ENCODE measurements at regions of chr19 and their contacts with region 1.

Region 1: GRCh38 chr19:45340232-45340898 is at the start of gene KLC3:
- DNase-seq: peak; percentile 47
- H3K4me3 Mint-ChIP-seq: no peak within 1 kb of the TSS
- H3K27ac Mint-ChIP-seq: no peak within 1 kb of the TSS
- H3K4me1 Mint-ChIP-seq: peaks cover 5% of the 10 kb centered on the region
- H3K27me3 Mint-ChIP-seq: no peaks in the 10 kb centered on the region
- CTCF ChIP-seq: no peak
- total RNA-seq, gene KLC3: 3.9 TPM in 2 replicates

Region 2: GRCh38 chr19:45164577-45165335 is 175.6 kb before region 1 on chr19:
- CTCF ChIA-PET with region 1: interaction called, 5 read pairs
- POLR2A ChIA-PET with region 1: no interaction called
- intact Hi-C with region 1: loop called (anchors 1 kb)
- DNase-seq: peak; percentile 95
- H3K4me3 Mint-ChIP-seq: no peak overlapping the region
- H3K27ac Mint-ChIP-seq: no peak overlapping the region
- H3K4me1 Mint-ChIP-seq: peaks cover 27% of the 10 kb centered on the region
- H3K27me3 Mint-ChIP-seq: no peaks in the 10 kb centered on the region
- CTCF ChIP-seq: no peak

Region 3: GRCh38 chr19:45200568-45200994 is 139.8 kb before region 1 on chr19:
- CTCF ChIA-PET with region 1: interaction called, 4 read pairs
- POLR2A ChIA-PET with region 1: interaction called, 3 read pairs
- intact Hi-C with region 1: loop called (anchors 1 kb)
- DNase-seq: peak; percentile 55
- H3K4me3 Mint-ChIP-seq: no peak overlapping the region
- H3K27ac Mint-ChIP-seq: no peak overlapping the region
- H3K4me1 Mint-ChIP-seq: peaks cover 21% of the 10 kb centered on the region
- H3K27me3 Mint-ChIP-seq: peaks cover 11% of the 10 kb centered on the region
- CTCF ChIP-seq: peak; percentile 18

Region 4: GRCh38 chr19:45250832-45251451 is 89.4 kb before region 1 on chr19 and contains the start of gene MARK4:
- CTCF ChIA-PET with region 1: interaction called, 4 read pairs
- POLR2A ChIA-PET with region 1: no interaction called
- intact Hi-C with region 1: loop called (anchors 2 kb)
- DNase-seq: peak; percentile 50
- H3K4me3 Mint-ChIP-seq: peak within 1 kb of the TSS; percentile 83
- H3K27ac Mint-ChIP-seq: peak within 1 kb of the TSS; percentile 93
- H3K4me1 Mint-ChIP-seq: peaks cover 20% of the 10 kb centered on the region
- H3K27me3 Mint-ChIP-seq: no peaks in the 10 kb centered on the region
- CTCF ChIP-seq: no peak
- total RNA-seq, gene MARK4: 22.4 and 24.2 TPM in 2 replicates

Region 5: GRCh38 chr19:45304141-45304926 is 36.0 kb before region 1 on chr19:
- CTCF ChIA-PET with region 1: no interaction called
- POLR2A ChIA-PET with region 1: no interaction called
- intact Hi-C with region 1: no loop called
- DNase-seq: no peak
- H3K4me3 Mint-ChIP-seq: no peak overlapping the region
- H3K27ac Mint-ChIP-seq: no peak overlapping the region
- H3K4me1 Mint-ChIP-seq: peaks cover 12% of the 10 kb centered on the region
- H3K27me3 Mint-ChIP-seq: no peaks in the 10 kb centered on the region
- CTCF ChIP-seq: no peak

Region 6: GRCh38 chr19:45350477-45351058 is 10.2 kb after region 1 on chr19:
- CTCF ChIA-PET with region 1: interaction called, 10 read pairs
- POLR2A ChIA-PET with region 1: interaction called, 3 read pairs
- intact Hi-C with region 1: no loop called
- DNase-seq: no peak
- H3K4me3 Mint-ChIP-seq: no peak overlapping the region
- H3K27ac Mint-ChIP-seq: no peak overlapping the region
- H3K4me1 Mint-ChIP-seq: no peaks in the 10 kb centered on the region
- H3K27me3 Mint-ChIP-seq: no peaks in the 10 kb centered on the region
- CTCF ChIP-seq: no peak

Region 7: DNA sequence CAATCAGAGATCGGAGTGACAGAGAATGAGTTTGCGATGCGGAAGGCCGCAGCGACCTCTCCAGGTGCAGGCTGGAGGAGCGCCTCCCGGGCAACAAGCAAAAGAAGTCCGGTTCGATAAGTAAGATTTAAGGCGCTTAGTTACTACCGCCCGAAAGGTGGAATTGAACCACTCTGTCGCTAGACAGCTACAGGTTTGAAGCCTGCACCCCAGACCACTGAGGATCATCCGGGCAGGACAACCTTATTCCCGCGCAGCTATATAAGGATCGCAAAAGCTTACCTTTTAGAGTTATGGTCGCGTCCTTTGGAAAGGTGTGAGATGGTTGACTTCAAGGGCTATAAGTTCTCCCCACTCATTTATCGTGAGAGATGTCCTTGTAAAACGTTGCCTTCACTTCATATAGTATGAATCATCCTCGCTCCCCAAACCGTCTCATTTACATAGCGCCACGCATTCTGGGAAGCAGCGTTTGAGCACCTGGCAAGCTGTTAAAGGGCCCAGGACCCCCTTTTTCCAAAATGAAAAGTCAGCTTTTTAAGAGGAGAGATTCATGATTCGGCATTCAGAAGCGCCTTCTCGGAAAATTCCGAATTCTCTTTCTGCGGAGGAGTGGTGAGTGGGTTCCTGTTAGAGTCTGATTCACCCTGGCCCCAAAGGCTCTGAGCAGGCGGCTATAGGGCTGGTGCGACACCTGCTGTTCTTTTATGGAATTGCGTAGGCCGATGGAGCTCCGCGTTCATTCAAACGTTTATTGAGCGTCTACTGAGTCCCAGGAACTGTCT is 138.3 kb after region 1 on chr19:
- CTCF ChIA-PET with region 1: interaction called, 3 read pairs
- POLR2A ChIA-PET with region 1: no interaction called
- intact Hi-C with region 1: loop called (anchors 2 kb)
- DNase-seq: peak; percentile 95
- H3K4me3 Mint-ChIP-seq: peak overlapping the region; percentile 76
- H3K27ac Mint-ChIP-seq: peak overlapping the region; percentile 99
- H3K4me1 Mint-ChIP-seq: peaks cover 14% of the 10 kb centered on the region
- H3K27me3 Mint-ChIP-seq: no peaks in the 10 kb centered on the region
- CTCF ChIP-seq: peak; percentile 97

Measured in MCF 10A (cell line).